ENCODE measurements at regions of chr12 and their contacts with region 1.

Region 1: GRCh38 chr12:83016218-83016835 is 329.6 kb downstream of the TMTC2 start:
- DNase-seq: peak; percentile 34

Region 2: DNA sequence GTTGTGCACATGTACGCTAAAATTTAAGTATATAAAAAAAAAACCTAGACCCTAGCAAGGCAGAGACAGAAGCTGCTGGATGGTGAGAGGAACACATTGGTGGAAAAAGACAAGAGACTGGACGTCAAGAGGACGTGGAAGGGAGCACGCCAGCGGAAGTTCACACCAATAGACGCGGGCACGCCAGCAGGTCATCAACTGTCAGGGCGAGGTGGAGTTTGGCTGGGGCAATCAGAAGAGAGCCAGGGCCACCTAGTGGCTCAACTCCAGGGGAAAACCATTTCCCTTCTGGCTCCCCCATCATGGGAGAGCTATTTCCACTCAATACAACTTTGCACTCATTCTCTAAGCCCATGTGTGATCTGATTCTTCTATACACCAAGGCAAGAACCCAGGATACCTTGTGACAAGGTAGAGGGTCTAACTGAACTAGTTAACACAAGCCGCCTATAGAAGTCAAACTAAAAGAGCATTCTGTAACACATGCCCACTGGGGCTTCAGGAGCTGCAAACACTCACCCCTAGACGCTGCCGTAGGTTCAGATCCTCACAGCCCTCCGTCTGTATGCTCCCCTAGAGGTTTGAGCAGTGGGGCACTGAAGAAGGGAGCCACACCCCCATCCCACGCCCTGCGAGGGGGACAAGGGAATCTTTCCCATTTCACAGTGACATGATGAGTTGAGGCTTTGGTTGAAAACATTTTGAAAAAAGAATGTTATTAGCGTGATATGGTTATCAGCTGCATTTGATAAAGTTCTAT is 373.1 kb after region 1 on chr12:
- in situ Hi-C with region 1: loop called (anchors 25 kb)
- DNase-seq: peak; percentile 89